Mucosa of descending colon (tissue), 3 donors: ENCODE measurements at regions of chr3 and their contacts with region 1.

Region 1: GRCh38 chr3:124557-125179 is 71.9 kb upstream of the CHL1 start:
- DNase-seq: no peak
- ATAC-seq: no peak
- H3K4me3 ChIP-seq: no peak overlapping the region
- H3K4me1 ChIP-seq: no peaks in the 10 kb centered on the region
- CTCF ChIP-seq: no peak

Region 2: DNA sequence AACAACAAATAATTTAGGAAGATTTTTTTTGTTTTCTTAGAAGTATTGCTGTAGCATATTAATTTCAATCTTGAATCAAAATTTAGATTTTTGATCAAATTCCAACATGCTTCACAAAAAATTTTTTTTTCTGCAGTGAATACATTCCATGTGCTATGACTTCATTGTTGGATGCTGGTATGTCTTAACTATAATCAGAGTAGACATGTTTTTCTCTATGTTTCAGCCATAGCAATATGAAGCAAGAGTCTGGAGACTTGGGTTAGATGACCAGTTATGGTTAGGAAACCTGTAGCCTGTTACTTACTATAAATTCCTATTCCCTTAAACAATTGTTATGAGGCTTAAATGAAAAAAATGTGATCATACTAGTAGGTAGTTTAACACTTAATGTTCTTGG is 104.2 kb before region 1 on chr3:
- intact Hi-C with region 1: no loop called
- DNase-seq: no peak
- ATAC-seq: no peak
- H3K4me3 ChIP-seq: no peak overlapping the region
- H3K4me1 ChIP-seq: no peaks in the 10 kb centered on the region
- CTCF ChIP-seq: no peak

Region 3: DNA sequence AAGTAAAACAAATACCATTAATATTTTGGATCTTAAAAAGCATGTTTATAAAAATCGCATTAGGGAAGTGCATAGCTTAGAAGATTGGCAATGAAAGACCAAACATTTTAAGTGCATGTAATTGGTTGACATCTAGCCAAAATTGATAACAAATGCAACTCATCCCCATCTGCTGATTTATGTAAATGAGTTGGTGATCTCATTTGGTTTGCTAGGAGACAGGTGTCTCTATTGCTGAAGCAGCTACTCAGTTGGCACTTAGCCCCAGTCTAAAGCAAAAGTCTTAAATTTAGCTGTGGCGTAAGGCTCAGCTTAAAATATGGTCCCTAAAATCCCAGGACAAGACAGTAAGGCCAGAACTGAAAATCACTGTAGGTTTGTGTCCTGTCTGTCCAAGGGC is 41.6 kb before region 1 on chr3:
- intact Hi-C with region 1: loop called in 1 of 2 experiments (anchors 2 kb)
- DNase-seq: no peak
- ATAC-seq: no peak
- H3K4me3 ChIP-seq: no peak overlapping the region
- H3K4me1 ChIP-seq: no peaks in the 10 kb centered on the region
- CTCF ChIP-seq: no peak